Activated CD4-positive, alpha-beta T cell treated with anti-CD3 and anti-CD28 coated beads for 36 hours (primary cell): ENCODE measurements at regions of chr5 and their contacts with region 1.

Region 1: DNA sequence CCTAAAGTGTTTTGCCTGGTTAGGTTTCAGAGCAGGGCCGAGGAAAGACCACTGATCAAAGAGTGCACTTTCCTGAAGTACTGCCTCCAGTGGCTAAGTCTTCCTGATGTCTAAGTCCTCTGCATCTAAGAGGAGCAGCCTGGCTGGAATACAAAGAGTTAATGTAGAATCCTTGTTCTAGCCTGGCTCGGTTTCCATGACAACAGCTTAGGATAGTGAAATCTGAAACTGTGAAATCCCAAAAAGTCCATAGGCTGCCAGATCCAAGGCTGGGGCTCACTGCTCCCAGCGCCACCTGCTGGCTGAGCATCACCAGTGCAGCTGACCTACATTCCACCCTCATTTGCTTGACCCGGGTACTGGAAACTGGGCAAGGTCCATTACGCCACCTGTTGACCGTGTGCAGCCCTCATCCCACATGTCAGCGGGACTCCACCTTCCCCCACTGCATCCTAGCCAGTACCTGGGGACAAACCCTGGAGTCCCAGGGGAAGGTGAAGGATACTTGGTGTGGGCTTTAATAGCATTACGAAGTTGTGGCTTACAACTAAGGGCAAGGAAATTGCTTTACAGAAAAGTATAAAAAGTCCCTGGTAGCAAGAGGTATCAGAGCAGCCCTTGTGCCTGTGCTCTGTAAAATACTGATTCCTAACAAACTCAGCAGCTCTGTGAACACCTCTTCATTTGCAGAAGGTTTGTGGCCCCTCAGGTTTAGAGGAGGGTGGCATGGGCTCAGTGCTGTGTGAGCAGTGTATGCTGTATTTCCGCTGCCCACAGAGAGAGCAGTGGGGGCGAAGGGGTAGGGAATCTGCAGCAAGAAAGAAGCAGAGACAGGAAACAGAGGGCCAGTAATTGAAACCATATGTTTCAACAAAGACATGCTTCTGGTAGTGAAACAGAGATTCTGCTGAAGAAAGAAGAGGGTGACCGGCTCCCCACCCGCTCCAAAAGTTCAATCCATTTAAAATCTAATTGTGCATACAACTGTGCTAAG is 36.0 kb downstream of the PCDHGC5 start:
- DNase-seq: peak; percentile 67
- ATAC-seq: peak; percentile 62
- H3K4me3 Mint-ChIP-seq: no peak overlapping the region
- H3K27ac Mint-ChIP-seq: no peak overlapping the region
- H3K4me1 Mint-ChIP-seq: peaks cover 28% of the 10 kb centered on the region
- H3K27me3 Mint-ChIP-seq: no peaks in the 10 kb centered on the region

Region 2: DNA sequence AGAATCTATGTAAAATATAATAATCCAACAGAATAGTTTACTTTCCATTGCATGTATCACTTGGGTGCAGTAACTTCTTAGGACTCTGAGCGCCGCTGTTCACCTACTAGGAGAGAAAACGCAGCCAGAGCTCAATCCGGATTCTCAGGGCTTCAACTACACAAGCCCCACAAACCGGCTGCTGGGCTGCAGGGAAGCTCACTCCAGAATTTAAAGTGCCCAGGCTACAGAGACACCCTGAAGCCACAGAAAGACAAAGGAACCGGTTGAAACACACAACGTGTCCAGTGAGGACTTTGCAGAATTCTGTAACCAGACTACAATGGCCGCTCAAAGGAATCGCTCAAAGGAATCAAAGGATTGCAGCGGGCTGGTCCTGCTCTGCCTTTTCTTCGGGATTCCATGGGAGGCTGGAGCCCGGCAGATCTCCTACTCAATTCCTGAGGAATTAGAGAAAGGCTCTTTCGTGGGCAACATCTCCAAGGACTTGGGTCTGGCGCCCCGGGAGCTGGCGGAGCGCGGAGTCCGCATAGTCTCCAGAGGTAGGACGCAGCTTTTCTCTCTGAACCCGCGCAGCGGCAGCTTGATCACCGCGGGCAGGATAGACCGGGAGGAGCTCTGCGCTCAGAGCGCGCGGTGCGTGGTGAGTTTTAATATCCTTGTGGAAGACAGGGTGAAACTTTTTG is 111.9 kb before region 1 on chr5 and contains the start of gene PCDHGA10:
- CTCF ChIA-PET with region 1: interaction called, 23 read pairs
- POLR2A ChIA-PET with region 1: no interaction called
- intact Hi-C with region 1: loop called (anchors 1 to 2 kb)
- DNase-seq: peak; percentile 74
- ATAC-seq: peak; percentile 76
- H3K4me3 Mint-ChIP-seq: peak within 1 kb of the TSS; percentile 62
- H3K27ac Mint-ChIP-seq: no peak within 1 kb of the TSS
- H3K4me1 Mint-ChIP-seq: peaks cover 10% of the 10 kb centered on the region
- H3K27me3 Mint-ChIP-seq: peaks cover 63% of the 10 kb centered on the region
- total RNA-seq, gene PCDHGA10: 0.07 TPM in 1 of 2 experiments, not detected in the other

Region 3: DNA sequence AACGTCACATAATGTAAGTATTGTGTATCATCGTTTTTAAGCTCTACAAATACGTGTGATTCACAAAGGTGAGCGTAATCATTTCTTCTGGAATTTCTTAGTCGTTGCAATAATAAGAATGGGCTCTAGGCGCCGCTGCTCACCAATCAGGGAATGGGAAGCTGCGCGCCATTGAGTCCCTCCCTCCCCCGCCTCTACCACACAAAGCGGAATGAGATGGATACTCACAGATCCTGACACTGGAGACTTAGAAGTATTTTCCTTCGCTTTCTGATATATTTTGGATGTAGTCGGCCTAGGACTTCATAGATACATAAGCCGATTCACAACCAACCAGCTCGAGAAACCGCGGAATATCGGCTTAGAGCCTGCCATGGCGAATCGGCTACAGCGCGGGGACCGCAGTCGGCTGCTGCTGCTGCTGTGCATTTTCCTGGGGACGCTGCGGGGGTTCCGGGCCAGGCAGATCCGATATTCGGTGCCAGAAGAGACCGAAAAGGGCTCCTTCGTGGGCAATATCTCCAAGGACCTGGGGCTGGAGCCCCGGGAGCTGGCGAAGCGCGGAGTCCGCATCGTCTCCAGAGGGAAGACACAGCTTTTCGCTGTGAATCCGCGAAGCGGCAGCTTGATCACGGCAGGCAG is 103.9 kb before region 1 on chr5 and contains the start of gene PCDHGA11:
- CTCF ChIA-PET with region 1: interaction called, 10 read pairs
- POLR2A ChIA-PET with region 1: no interaction called
- intact Hi-C with region 1: loop called (anchors 1 to 2 kb)
- DNase-seq: peak; percentile 75
- ATAC-seq: peak; percentile 57
- H3K4me3 Mint-ChIP-seq: peak within 1 kb of the TSS; percentile 69
- H3K27ac Mint-ChIP-seq: no peak within 1 kb of the TSS
- H3K4me1 Mint-ChIP-seq: peaks cover 2% of the 10 kb centered on the region
- H3K27me3 Mint-ChIP-seq: peaks cover 70% of the 10 kb centered on the region
- total RNA-seq, gene PCDHGA11: 0.07 TPM in 1 of 2 experiments, not detected in the other

Region 4: GRCh38 chr5:141430332-141431113 is 94.4 kb before region 1 on chr5 and contains the start of gene PCDHGA12:
- CTCF ChIA-PET with region 1: interaction called, 15 read pairs
- POLR2A ChIA-PET with region 1: no interaction called
- intact Hi-C with region 1: loop called in 1 of 2 experiments (anchors 1 kb)
- DNase-seq: peak; percentile 68
- ATAC-seq: peak; percentile 73
- H3K4me3 Mint-ChIP-seq: peak within 1 kb of the TSS; percentile 45
- H3K27ac Mint-ChIP-seq: no peak within 1 kb of the TSS
- H3K4me1 Mint-ChIP-seq: peaks cover 17% of the 10 kb centered on the region
- H3K27me3 Mint-ChIP-seq: peaks cover 69% of the 10 kb centered on the region
- total RNA-seq, gene PCDHGA12: 0.07 to 0.09 TPM

Region 5: DNA sequence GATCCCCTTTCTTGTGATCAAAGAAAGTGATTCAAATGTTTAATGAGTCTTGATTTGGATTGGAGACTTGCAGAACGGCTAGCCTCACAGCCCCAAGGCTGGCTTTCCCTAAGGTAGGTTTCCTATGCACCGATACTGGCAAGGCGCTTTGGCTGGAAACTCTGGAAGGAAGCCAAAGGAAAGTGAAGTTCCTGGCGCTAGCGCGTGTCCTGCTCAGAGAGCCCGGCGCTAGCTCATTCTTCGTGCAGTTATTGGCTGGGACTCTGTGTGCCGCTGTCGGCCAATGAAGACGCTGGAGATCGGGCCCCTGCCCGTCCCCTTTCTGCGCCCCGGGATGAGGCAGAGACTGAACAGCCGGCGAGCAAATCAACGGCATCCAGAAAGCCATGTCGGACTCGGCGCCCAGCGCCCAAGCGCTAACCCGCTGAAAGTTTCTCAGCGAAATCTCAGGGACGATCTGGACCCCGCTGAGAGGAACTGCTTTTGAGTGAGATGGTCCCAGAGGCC is 49.2 kb before region 1 on chr5 and contains the start of gene PCDHGC3:
- CTCF ChIA-PET with region 1: interaction called, 9 read pairs
- POLR2A ChIA-PET with region 1: no interaction called
- intact Hi-C with region 1: loop called in 1 of 2 experiments (anchors 1 kb)
- DNase-seq: peak; percentile 79
- ATAC-seq: peak; percentile 97
- H3K4me3 Mint-ChIP-seq: peak within 1 kb of the TSS; percentile 82
- H3K27ac Mint-ChIP-seq: peak within 1 kb of the TSS; percentile 37
- H3K4me1 Mint-ChIP-seq: peaks cover 28% of the 10 kb centered on the region
- H3K27me3 Mint-ChIP-seq: peaks cover 47% of the 10 kb centered on the region
- total RNA-seq, gene PCDHGC3: 0.16 to 0.34 TPM

Region 6: GRCh38 chr5:141547488-141547887 is 22.6 kb after region 1 on chr5:
- CTCF ChIA-PET with region 1: interaction called, 22 read pairs
- POLR2A ChIA-PET with region 1: no interaction called
- intact Hi-C with region 1: no loop called
- DNase-seq: no peak
- ATAC-seq: no peak
- H3K4me3 Mint-ChIP-seq: no peak overlapping the region
- H3K27ac Mint-ChIP-seq: no peak overlapping the region
- H3K4me1 Mint-ChIP-seq: peaks cover 20% of the 10 kb centered on the region
- H3K27me3 Mint-ChIP-seq: no peaks in the 10 kb centered on the region